ENCODE measurements at regions of chr19 and their contacts with region 1.

Region 1: GRCh38 chr19:6516659-6517291 is 14.1 kb upstream of the TNFSF9 start:
- DNase-seq: peak; percentile 92
- ATAC-seq: peak; percentile 63
- H3K4me3 Mint-ChIP-seq: peak overlapping the region; percentile 97
- H3K27ac Mint-ChIP-seq: peak overlapping the region; percentile 59
- H3K4me1 Mint-ChIP-seq: peaks cover 45% of the 10 kb centered on the region
- H3K27me3 Mint-ChIP-seq: no peaks in the 10 kb centered on the region
- CTCF ChIP-seq: peak; percentile 84

Region 2: DNA sequence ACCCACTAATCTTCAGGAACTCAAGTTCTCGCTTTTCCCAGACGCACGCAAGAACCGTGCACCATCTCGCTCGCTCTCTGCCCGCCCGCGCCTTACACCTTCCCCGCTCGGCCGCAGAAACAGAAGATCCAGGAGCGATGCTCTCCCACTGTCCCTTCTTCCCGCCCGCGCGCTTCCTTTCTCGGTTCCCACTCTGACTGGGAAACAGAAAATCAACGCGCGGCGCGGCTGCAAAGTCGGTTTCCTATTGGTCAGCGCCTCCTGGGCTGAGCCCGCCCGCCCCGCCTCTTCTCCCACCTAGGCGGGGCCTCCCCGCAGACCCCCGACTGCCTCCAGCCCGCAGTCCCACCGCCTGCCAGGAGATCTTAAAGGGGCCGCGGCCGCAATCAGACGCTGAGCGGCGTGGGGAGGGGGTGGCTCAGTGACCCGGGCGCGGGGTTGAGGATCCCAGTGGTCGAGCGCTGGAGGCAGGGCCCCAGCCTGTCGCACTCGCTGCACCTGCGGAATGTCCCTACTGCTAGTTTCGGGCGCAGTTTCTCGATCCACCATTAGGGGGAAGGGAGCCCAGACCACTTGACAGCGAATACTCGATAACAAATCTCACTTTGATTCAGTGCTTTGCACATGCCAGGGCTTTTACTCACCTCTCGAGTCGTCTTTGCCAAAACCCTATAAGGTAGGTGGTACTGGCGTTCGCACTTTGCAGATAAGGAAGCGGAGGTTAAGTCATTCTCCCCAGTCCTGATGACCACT is 56.5 kb before region 1 on chr19:
- CTCF ChIA-PET with region 1: no interaction called
- POLR2A ChIA-PET with region 1: interaction called, 4 read pairs
- intact Hi-C with region 1: loop called (anchors 1 kb)
- DNase-seq: peak; percentile 90
- ATAC-seq: peak; percentile 82
- H3K4me3 Mint-ChIP-seq: peak overlapping the region; percentile 90
- H3K27ac Mint-ChIP-seq: peak overlapping the region; percentile 79
- H3K4me1 Mint-ChIP-seq: peaks cover 42% of the 10 kb centered on the region
- H3K27me3 Mint-ChIP-seq: peaks cover 3% of the 10 kb centered on the region
- CTCF ChIP-seq: no peak

Region 3: DNA sequence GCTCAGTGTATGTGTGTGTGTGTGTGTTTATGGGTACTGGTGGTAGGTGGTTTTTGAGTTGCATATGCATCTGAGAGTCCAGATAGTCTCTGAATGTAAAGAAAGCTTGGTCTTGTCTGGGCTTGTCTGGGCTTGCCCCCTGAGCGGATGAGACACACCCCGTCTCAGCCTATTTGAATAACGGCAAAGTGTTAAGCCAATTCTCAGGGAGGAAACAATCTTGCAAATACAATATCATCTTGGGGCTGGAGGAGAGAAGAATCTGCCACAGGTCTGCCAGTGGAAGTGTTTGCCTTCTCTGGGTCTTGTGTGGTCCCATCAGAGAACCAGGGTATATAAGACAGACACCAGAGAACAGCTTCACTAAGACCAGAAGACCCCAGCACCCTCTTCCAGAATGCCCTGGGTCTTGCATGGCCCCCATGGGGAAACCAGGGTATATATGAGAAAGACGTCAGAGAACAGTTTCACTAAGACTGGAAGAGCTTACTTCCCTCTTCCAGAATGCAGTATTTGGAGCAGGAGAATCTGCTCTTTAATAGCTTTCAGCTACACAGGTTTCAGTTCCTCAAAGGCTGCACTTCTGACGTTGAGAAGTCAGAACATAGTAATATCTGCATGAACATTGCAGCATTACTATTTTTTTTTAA is 60.8 kb after region 1 on chr19:
- CTCF ChIA-PET with region 1: no interaction called
- POLR2A ChIA-PET with region 1: interaction called, 26 read pairs
- intact Hi-C with region 1: loop called (anchors 1 kb)
- DNase-seq: peak; percentile 54
- ATAC-seq: peak; percentile 90
- H3K4me3 Mint-ChIP-seq: peak overlapping the region; percentile 68
- H3K27ac Mint-ChIP-seq: no peak overlapping the region
- H3K4me1 Mint-ChIP-seq: peaks cover 6% of the 10 kb centered on the region
- H3K27me3 Mint-ChIP-seq: no peaks in the 10 kb centered on the region
- CTCF ChIP-seq: no peak

Region 4: DNA sequence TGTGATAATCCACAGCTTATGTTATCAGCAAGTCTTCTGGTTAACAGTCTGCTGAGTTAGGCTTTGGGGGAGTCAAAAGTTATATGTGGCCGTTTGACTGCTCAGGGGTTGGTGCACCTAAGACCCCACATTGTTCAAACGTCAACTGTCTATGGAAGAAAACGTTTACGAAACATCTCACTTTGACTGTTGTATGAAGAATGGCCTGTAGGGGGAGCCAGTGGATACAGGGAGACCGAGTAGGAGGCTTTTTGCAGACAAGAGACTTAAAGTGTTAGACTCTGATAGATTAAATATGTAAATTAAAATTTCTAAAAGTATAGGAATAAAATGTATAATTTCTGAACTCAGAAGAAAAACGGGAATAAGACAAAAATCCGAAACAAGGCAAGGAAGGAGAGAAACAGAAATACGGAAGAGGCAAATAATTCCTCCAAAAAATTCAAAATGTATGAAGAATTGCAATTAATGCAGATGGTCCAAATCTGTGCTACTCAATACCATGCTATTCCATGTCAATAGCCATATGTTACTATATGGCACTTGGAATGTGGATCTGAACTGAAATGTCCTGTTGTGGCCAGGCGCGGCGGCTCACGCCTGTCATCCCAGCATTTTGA is 115.3 kb after region 1 on chr19:
- CTCF ChIA-PET with region 1: interaction called, 72 read pairs
- POLR2A ChIA-PET with region 1: interaction called, 24 read pairs
- intact Hi-C with region 1: loop called (anchors 1 kb)
- DNase-seq: peak; percentile 25
- ATAC-seq: peak; percentile 81
- H3K4me3 Mint-ChIP-seq: no peak overlapping the region
- H3K27ac Mint-ChIP-seq: peak overlapping the region; percentile 26
- H3K4me1 Mint-ChIP-seq: peaks cover 29% of the 10 kb centered on the region
- H3K27me3 Mint-ChIP-seq: peaks cover 2% of the 10 kb centered on the region
- CTCF ChIP-seq: peak; percentile 65

Region 5: DNA sequence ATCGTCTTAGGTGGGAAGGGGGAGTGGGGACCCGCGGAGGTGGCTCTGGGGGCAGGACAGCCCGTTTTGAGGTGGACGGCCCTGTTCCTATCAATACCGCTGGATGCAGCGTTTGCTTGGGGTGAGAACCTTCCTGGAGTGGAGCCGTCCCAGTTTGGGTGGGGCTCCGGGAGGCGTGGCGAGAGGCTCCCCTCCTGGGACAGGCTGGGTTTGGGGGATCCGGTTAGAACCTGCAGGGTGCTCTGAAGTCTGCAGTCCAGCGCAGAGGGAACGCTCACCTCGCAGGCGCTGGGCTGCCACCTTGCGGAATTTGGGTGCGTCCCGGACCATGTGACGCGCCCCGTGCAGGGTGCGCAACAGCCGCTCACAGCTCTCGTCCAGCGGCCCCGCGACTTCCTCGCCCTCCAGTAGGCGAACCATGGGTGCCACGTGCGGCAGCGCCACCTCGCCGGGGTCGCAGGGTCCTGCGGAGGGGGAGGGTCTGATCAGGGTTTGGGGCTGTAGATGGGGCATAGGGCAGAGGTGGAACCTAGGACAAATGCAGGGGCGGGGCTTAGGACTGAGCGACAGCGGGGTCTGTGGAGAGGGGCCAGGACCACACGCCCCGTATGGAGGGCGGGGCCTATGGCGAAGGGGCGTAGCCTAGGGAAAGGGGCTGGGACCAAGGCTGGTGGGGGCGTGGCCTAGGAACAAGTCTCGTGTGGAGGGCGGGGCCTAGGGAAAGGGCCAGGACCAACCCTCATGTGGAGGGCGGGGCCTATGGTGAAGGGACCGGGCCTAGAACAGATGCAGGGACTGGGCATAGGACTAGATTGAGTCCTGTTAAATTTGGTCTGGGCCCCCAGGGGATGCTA is 236.6 kb after region 1 on chr19:
- CTCF ChIA-PET with region 1: interaction called, 4 read pairs
- POLR2A ChIA-PET with region 1: interaction called, 3 read pairs
- intact Hi-C with region 1: loop called (anchors 1 kb)
- DNase-seq: peak; percentile 91
- ATAC-seq: peak; percentile 93
- H3K4me3 Mint-ChIP-seq: peak overlapping the region; percentile 87
- H3K27ac Mint-ChIP-seq: peak overlapping the region; percentile 82
- H3K4me1 Mint-ChIP-seq: peaks cover 33% of the 10 kb centered on the region
- H3K27me3 Mint-ChIP-seq: no peaks in the 10 kb centered on the region
- CTCF ChIP-seq: no peak

Measured in activated B cell treated with CpG ODN at 0.5 μM for 24 hours (primary cell).